ENCODE measurements at regions of chr6 and their contacts with region 1.

Region 1: GRCh38 chr6:1686117-1687098 is 76.7 kb downstream of the FOXC1 start:
- DNase-seq: peak; percentile 94
- ATAC-seq: peak; percentile 78
- H3K4me3 ChIP-seq: peak overlapping the region; percentile 34; the same call in 1 of the 2 replicates
- H3K27ac ChIP-seq: peak overlapping the region; percentile 92
- H3K4me1 ChIP-seq: peaks cover 55% of the 10 kb centered on the region
- H3K27me3 ChIP-seq: no peaks in the 10 kb centered on the region
- CTCF ChIP-seq: peak; percentile 74

Region 2: DNA sequence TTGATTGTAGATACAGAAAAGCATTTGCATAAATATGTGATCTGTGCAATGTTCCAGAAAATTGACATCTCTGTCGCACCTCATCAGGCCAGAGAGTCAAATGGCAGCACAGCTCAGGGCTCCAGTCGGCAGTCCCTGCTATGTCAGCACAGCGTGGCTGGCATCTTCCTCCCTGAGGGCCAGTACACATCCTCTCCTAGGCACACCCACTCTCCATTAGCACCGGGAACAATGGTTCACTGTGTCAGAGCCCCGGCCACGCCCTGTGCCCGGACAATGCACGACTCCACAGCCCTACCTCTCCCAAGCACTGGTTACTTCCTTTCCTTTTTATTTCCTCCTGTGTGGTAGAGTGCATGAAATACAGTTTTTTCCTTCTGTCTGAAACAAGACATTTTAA is 38.2 kb after region 1 on chr6:
- CTCF ChIA-PET with region 1: no interaction called
- POLR2A ChIA-PET with region 1: no interaction called
- intact Hi-C with region 1: loop called (anchors 1 kb)
- DNase-seq: peak; percentile 93
- ATAC-seq: peak; percentile 99
- H3K4me3 ChIP-seq: peak overlapping the region; percentile 45
- H3K27ac ChIP-seq: peak overlapping the region; percentile 96
- H3K4me1 ChIP-seq: peaks cover 20% of the 10 kb centered on the region
- H3K27me3 ChIP-seq: no peaks in the 10 kb centered on the region
- CTCF ChIP-seq: no peak

Measured in PC-3 (cell line).